ENCODE measurements at regions of chr12 and their contacts with region 1.

Region 1: DNA sequence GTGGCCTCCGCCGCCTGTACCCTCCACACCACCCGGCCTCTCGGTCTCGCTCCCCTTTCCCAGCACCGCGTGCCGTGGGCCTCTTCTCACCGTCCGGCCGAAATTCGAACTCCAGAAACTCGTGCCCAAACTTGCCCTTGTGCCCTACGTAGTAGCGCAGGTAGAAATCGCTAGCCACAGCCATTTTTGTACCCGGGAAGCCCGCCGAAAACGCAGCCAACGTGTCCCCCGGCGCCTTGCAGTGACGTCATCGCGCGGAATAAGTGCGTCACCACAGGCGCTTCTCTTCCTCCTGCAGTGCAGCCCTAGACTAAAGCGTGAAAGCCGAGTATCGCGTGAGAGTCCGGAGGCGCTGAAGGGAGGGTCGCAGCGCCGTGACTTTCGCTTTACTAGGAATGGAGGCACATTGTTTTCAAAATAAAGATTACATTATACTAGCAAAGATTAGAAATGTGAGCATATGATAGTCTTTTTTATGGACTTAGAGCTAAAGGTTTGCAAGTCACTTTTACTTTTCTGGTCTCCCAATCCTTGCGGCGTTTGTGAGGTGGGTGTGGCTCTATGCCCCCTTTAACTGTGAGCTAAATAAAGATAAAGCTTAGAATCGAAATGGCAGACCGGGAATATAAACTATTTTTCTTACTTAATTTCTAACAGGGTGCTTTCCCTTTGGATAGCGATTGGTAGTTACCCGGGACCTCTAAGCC is at the start of gene MAGOHB:
- DNase-seq: peak; percentile 87 to 100
- H3K4me3 ChIP-seq: peak within 1 kb of the TSS; percentile 86 to 96 (median 93)
- H3K27ac ChIP-seq: peak within 1 kb of the TSS; percentile 99
- H3K4me1 ChIP-seq: peaks cover 0 to 3% (median 0%) of the 10 kb centered on the region in 4 experiments; a peak in 2 of 7 replicates
- H3K27me3 ChIP-seq: no peaks in the 10 kb centered on the region
- CTCF ChIP-seq: no peak
- EP300 ChIP-seq: peak in 1 of 2 experiments; percentile 76; a peak in 1 of 3 replicates
- POLR2A ChIP-seq: peak; percentile 85 to 91; a peak in 2 of 3 replicates
- RAD21 ChIP-seq: no peak
- total RNA-seq, gene MAGOHB: 51.9 and 53.7 TPM in 2 replicates

Region 2: GRCh38 chr12:10590966-10591365 is 22.5 kb before region 1 on chr12:
- CTCF ChIA-PET with region 1: no interaction called
- POLR2A ChIA-PET with region 1: no interaction called
- DNase-seq: no peak
- H3K4me3 ChIP-seq: no peak overlapping the region
- H3K27ac ChIP-seq: no peak overlapping the region
- H3K4me1 ChIP-seq: no peaks in the 10 kb centered on the region
- H3K27me3 ChIP-seq: no peaks in the 10 kb centered on the region
- CTCF ChIP-seq: no peak
- EP300 ChIP-seq: no peak
- POLR2A ChIP-seq: no peak
- RAD21 ChIP-seq: no peak

Region 3: GRCh38 chr12:10601860-10602259 is 11.6 kb before region 1 on chr12:
- CTCF ChIA-PET with region 1: interaction called, 4 read pairs
- POLR2A ChIA-PET with region 1: interaction called, 10 read pairs
- DNase-seq: no peak
- H3K4me3 ChIP-seq: no peak overlapping the region
- H3K27ac ChIP-seq: no peak overlapping the region
- H3K4me1 ChIP-seq: no peaks in the 10 kb centered on the region
- H3K27me3 ChIP-seq: no peaks in the 10 kb centered on the region
- CTCF ChIP-seq: no peak
- EP300 ChIP-seq: no peak
- POLR2A ChIP-seq: no peak
- RAD21 ChIP-seq: no peak

Region 4: DNA sequence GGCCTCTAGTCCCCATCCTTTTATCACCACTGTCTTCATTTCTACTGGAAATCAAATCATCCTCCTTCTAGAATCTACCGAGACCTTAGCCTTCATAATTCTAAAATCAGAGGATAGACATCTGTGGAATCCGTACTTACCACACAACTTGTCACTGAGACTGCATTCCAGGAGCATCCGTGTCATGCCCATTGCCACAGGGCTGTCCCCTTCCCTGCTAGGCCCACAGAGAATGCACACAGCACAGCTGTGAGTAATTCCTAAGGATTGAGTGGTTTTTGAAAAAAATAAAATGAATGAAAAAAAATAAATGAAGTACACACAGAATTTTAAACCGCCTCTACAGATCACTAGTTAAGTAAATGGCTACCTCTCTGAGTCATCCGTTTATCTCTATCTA is 20.9 kb after region 1 on chr12:
- CTCF ChIA-PET with region 1: interaction called, 5 read pairs
- POLR2A ChIA-PET with region 1: interaction called, 12 read pairs
- DNase-seq: no peak
- H3K4me3 ChIP-seq: no peak overlapping the region
- H3K27ac ChIP-seq: no peak overlapping the region
- H3K4me1 ChIP-seq: peaks cover 0 to 7% (median 2%) of the 10 kb centered on the region in 4 experiments; a peak in 4 of 7 replicates
- H3K27me3 ChIP-seq: no peaks in the 10 kb centered on the region
- CTCF ChIP-seq: no peak
- EP300 ChIP-seq: no peak
- POLR2A ChIP-seq: no peak
- RAD21 ChIP-seq: no peak

Region 5: DNA sequence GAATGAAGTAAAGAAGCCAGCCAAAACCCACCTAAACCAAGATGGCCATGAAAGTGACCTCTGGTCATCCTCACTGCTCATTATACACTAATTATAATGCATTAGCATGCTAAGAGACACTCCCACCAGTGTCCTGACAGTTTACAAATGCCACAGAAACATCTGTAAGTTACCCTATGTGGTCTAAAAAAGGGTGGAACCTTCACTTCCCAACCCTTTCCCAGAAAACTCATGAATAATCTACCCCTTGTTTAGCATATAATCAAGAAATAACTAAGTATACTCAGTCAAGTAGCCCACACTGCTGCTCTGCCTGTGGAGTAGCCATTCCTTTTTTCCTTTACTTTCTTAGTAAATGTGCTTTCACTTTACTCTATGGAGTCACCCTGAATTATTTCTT is 40.5 kb after region 1 on chr12:
- CTCF ChIA-PET with region 1: no interaction called
- POLR2A ChIA-PET with region 1: no interaction called
- DNase-seq: no peak
- H3K4me3 ChIP-seq: no peak overlapping the region
- H3K27ac ChIP-seq: no peak overlapping the region
- H3K4me1 ChIP-seq: no peaks in the 10 kb centered on the region
- H3K27me3 ChIP-seq: no peaks in the 10 kb centered on the region
- CTCF ChIP-seq: no peak
- EP300 ChIP-seq: no peak
- POLR2A ChIP-seq: no peak
- RAD21 ChIP-seq: no peak

Region 6: GRCh38 chr12:10668526-10668925 is 55.0 kb after region 1 on chr12:
- CTCF ChIA-PET with region 1: interaction called, 3 read pairs
- POLR2A ChIA-PET with region 1: interaction called, 12 read pairs
- DNase-seq: no peak
- H3K4me3 ChIP-seq: no peak overlapping the region
- H3K27ac ChIP-seq: no peak overlapping the region
- H3K4me1 ChIP-seq: peaks cover 0 to 2% (median 0%) of the 10 kb centered on the region in 4 experiments; a peak in 1 of 7 replicates
- H3K27me3 ChIP-seq: no peaks in the 10 kb centered on the region
- CTCF ChIP-seq: no peak
- EP300 ChIP-seq: no peak
- POLR2A ChIP-seq: no peak
- RAD21 ChIP-seq: no peak

Region 7: GRCh38 chr12:10716704-10717315 is 103.3 kb after region 1 on chr12:
- CTCF ChIA-PET with region 1: no interaction called
- POLR2A ChIA-PET with region 1: interaction called, 12 read pairs
- DNase-seq: no peak
- H3K4me3 ChIP-seq: 0 out of 8 replicates have a peak overlapping the region, but pooled peaks of 1 of the 4 experiments have one; percentile 0
- H3K27ac ChIP-seq: no peak overlapping the region; the same call in 1 of the 2 replicates
- H3K4me1 ChIP-seq: peaks cover 7 to 24% (median 10%) of the 10 kb centered on the region in 4 experiments; a peak in 6 of 7 replicates
- H3K27me3 ChIP-seq: no peaks in the 10 kb centered on the region
- CTCF ChIP-seq: no peak
- EP300 ChIP-seq: no peak
- POLR2A ChIP-seq: no peak
- RAD21 ChIP-seq: no peak

Measured in H1 (cell line).